Mammary epithelial cell (primary cell): ENCODE measurements at regions of chr10 and their contacts with region 1.

Region 1: GRCh38 chr10:97234400-97234799 is 48.6 kb upstream of the SLIT1 start:
- DNase-seq: peak; percentile 19
- H3K4me3 ChIP-seq: no peak overlapping the region
- H3K27ac ChIP-seq: no peak overlapping the region
- H3K4me1 ChIP-seq: no peaks in the 10 kb centered on the region
- H3K27me3 ChIP-seq: no peaks in the 10 kb centered on the region
- CTCF ChIP-seq: peak; percentile 50 to 57

Region 2: GRCh38 chr10:96496281-96496925 is 738.0 kb before region 1 on chr10:
- CTCF ChIA-PET with region 1: no interaction called
- dilution Hi-C with region 1: no loop called
- in situ Hi-C with region 1: no loop called
- intact Hi-C with region 1: loop called (anchors 10 kb)
- DNase-seq: no peak
- H3K4me3 ChIP-seq: no peak overlapping the region
- H3K27ac ChIP-seq: no peak overlapping the region
- H3K4me1 ChIP-seq: peaks cover under 1% of the 10 kb centered on the region
- H3K27me3 ChIP-seq: no peaks in the 10 kb centered on the region
- CTCF ChIP-seq: no peak

Region 3: DNA sequence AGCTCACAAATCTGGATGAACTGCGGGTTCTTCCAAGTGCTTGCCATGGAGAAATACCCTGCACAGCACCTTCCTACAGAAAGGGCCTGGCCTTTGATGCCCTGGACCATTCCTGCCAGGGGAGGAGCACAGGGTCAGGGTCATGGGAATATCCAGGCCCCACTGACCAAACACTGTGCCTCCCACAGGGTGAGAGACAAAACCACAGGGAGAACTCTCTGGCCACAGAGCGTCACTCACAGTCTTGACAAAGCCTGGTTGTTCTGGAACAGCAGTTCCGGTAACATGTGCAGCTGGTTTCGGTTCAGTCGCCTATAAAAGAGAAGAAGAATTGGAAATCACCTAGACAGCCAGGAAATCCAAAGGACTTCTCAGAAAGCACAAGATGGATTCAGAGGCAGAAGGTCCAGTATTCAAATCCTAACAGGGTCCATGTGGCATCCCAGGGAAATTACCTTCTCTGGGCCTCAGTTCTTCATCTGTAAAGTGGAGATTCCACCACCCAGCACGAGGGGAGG is 76.8 kb before region 1 on chr10:
- CTCF ChIA-PET with region 1: interaction called, 25 read pairs
- dilution Hi-C with region 1: no loop called
- in situ Hi-C with region 1: no loop called
- intact Hi-C with region 1: no loop called
- DNase-seq: no peak
- H3K4me3 ChIP-seq: no peak overlapping the region
- H3K27ac ChIP-seq: no peak overlapping the region
- H3K4me1 ChIP-seq: no peaks in the 10 kb centered on the region
- H3K27me3 ChIP-seq: peaks cover 5% of the 10 kb centered on the region
- CTCF ChIP-seq: no peak